ENCODE measurements at regions of chr11 and their contacts with region 1.

Region 1: DNA sequence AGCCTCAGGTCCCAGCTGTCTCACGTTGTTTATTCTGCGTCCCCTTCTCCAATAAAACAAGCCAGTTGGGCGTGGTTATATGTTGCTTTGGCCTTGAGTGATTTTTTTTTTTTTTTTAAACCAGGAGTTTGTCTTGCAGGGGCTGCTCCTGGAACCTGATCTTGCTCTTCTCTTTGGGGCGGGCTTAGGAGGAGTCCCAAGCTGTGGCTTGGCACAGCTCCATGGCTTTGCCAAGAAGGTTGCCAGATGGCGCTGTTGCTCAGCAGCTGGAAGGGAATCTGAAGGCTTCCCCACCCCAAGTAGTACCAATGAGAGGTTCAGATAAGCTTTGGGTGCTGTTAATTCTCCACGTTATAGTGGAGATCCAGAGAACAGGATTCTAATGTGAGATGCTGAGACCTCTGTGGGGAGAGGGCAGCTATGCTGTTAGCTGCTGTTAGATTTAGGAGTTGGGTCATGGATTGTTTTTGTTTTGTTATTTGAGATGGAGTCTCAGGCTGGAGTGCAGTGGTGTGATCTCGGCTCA is 2.0 kb upstream of the FERMT3 start:
- DNase-seq: peak; percentile 69 to 71
- H3K4me3 ChIP-seq: no peak overlapping the region
- H3K4me3 Mint-ChIP-seq: no peak overlapping the region
- H3K27ac Mint-ChIP-seq: peak overlapping the region; percentile 39
- H3K4me1 ChIP-seq: no peaks in the 10 kb centered on the region
- H3K4me1 Mint-ChIP-seq: no peaks in the 10 kb centered on the region
- H3K27me3 ChIP-seq: no peaks in the 10 kb centered on the region
- H3K27me3 Mint-ChIP-seq: no peaks in the 10 kb centered on the region
- CTCF ChIP-seq: peak; percentile 59 to 74

Region 2: GRCh38 chr11:64233913-64234834 is 29.6 kb after region 1 on chr11 and contains the start of gene VEGFB:
- CTCF ChIA-PET with region 1: no interaction called
- POLR2A ChIA-PET with region 1: no interaction called
- intact Hi-C with region 1: loop called (anchors 1 kb)
- DNase-seq: peak; percentile 77 to 84
- H3K4me3 ChIP-seq: peak within 1 kb of the TSS; percentile 77
- H3K4me3 Mint-ChIP-seq: peak within 1 kb of the TSS; percentile 79
- H3K27ac Mint-ChIP-seq: peak within 1 kb of the TSS; percentile 48
- H3K4me1 ChIP-seq: peaks cover 23% of the 10 kb centered on the region
- H3K4me1 Mint-ChIP-seq: no peaks in the 10 kb centered on the region
- H3K27me3 ChIP-seq: no peaks in the 10 kb centered on the region
- H3K27me3 Mint-ChIP-seq: no peaks in the 10 kb centered on the region
- CTCF ChIP-seq: no peak
- total RNA-seq, gene VEGFB: 60.6 and 61.7 TPM in 2 replicates

Measured in Caco-2 (cell line).